Activated CD8-positive, alpha-beta T cell treated with anti-CD3 and anti-CD28 coated beads for 36 hours (primary cell): ENCODE measurements at regions of chr1 and their contacts with region 1.

Region 1: GRCh38 chr1:45535988-45536766 is 14.4 kb upstream of the AKR1A1 start:
- DNase-seq: no peak
- ATAC-seq: peak; percentile 83
- H3K4me3 Mint-ChIP-seq: no peak overlapping the region
- H3K27ac Mint-ChIP-seq: no peak overlapping the region
- H3K4me1 Mint-ChIP-seq: peaks cover 13% of the 10 kb centered on the region
- H3K27me3 Mint-ChIP-seq: peaks cover 1% of the 10 kb centered on the region
- CTCF ChIP-seq: no peak

Region 2: DNA sequence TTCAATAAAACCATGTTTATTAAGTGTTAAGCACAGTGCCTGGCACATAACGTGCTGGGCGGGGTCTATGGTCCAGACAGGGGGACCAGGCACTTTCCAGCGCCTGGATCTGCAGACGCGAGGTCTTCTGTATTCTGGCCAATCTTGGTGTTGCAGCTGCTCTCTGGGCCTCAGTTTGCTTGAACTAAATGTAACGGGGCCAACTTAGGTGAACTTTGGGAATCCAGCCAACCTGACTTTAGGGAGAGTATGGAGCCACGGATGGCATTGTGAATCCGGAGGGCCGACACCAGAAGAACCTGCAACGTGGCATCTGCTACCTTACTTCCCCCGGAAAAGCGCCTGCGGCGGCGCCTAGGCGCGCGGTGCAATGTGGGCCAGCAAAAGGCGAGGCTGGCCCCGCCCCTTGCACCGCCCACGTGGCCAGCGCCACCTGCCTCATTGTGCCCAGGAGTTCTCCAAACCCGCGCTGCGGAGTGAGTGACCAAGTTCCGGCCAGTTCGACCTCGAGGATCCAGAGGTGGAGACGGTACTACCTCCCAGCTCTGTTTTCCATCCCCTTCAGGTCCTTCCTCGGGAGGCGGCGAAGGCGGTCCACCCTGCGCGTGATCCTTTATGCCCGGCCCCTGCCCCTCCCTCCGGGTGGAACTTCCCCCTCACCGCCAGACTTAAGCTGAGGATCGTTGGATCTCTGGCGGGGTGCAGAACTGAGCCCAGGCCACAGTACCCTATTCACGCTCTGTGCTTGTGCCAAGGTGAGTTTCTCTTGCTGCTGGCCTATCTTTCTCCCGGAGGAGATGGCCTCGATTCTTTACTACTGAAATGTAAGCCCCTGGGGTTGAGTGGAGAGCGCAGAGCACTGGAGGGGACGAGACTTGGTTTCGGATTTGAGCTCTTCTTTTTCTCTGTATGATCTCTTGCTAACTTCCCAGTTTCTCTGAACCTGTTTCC is 14.5 kb after region 1 on chr1 and contains the start of gene AKR1A1:
- CTCF ChIA-PET with region 1: no interaction called
- POLR2A ChIA-PET with region 1: interaction called, 11 read pairs
- intact Hi-C with region 1: no loop called
- DNase-seq: peak; percentile 93
- ATAC-seq: peak; percentile 94
- H3K4me3 Mint-ChIP-seq: peak within 1 kb of the TSS; percentile 100
- H3K27ac Mint-ChIP-seq: peak within 1 kb of the TSS; percentile 98
- H3K4me1 Mint-ChIP-seq: peaks cover 25% of the 10 kb centered on the region
- H3K27me3 Mint-ChIP-seq: peaks cover 1% of the 10 kb centered on the region
- CTCF ChIP-seq: no peak
- total RNA-seq, gene AKR1A1: 184 to 186 TPM